Left ventricle myocardium superior (tissue), 1 donor: ENCODE measurements at regions of chr9 and their contacts with region 1.

Region 1: GRCh38 chr9:21121595-21122251 is 19.9 kb downstream of the IFNW1 start:
- DNase-seq: no peak
- ATAC-seq: no peak

Region 2: DNA sequence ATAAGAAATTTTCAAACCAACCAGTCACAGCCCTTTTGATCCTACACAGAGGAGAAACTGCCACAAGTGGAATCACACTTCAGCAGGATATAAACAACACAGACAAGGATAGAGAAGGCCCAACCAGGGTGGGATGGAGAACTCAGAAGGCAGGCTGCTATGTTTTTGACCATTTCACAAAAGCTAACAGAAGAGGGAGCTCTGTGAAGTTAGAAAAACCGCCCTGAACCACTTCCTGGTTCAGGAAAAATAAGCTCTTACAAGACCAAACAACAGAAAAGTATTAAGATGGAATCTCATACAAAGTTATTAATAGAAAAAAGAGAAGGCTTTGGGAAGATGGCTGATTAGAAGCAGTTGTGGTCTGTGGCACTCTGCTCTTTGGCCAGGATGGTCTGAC is 43.0 kb before region 1 on chr9:
- intact Hi-C with region 1: loop called (anchors 2 kb)
- DNase-seq: no peak
- ATAC-seq: no peak

Region 3: DNA sequence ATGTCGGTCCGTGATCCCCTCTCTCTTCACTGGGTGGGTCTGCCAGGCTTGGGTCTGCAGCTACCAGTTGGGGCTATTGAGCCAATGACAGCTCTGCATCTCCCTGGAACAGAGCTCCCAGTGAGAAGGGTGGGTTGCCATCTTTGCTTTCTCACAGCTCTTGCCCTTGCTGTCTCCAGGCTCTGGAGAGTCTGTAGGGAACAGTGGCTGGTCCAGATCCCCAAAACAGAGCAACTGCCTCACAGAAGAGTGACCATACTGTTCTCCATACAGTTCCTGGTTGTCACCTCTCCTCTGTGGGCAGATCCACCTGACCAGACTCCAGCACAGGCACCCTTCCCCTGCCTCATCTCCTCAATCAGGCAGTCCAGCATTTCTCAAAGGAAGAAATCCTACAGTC is 111.5 kb after region 1 on chr9:
- intact Hi-C with region 1: no loop called
- DNase-seq: no peak
- ATAC-seq: no peak